Dendritic cell treated with granulocyte-macrophage colony-stimulating factor and Interleukin-4, amounts not matched to agents 40 ng/mL and 50 ng/mL, for 4 days (primary cell): ENCODE measurements at regions of chr11 and their contacts with region 1.

Region 1: GRCh38 chr11:121886005-121886734 is 229.8 kb downstream of the BLID start:
- H3K4me3 Mint-ChIP-seq: no peak overlapping the region
- H3K27ac Mint-ChIP-seq: no peak overlapping the region
- H3K4me1 Mint-ChIP-seq: peaks cover 57% of the 10 kb centered on the region
- H3K27me3 Mint-ChIP-seq: peaks cover 14% of the 10 kb centered on the region

Region 2: GRCh38 chr11:121292495-121293287 is 593.5 kb before region 1 on chr11 and contains the start of gene SC5D:
- intact Hi-C with region 1: no loop called
- H3K4me3 Mint-ChIP-seq: peak within 1 kb of the TSS; percentile 90
- H3K27ac Mint-ChIP-seq: peak within 1 kb of the TSS; percentile 89
- H3K4me1 Mint-ChIP-seq: peaks cover 35% of the 10 kb centered on the region
- H3K27me3 Mint-ChIP-seq: no peaks in the 10 kb centered on the region

Region 3: GRCh38 chr11:121417055-121417551 is 469.1 kb before region 1 on chr11:
- intact Hi-C with region 1: no loop called
- H3K4me3 Mint-ChIP-seq: peak overlapping the region; percentile 2
- H3K27ac Mint-ChIP-seq: peak overlapping the region; percentile 93
- H3K4me1 Mint-ChIP-seq: peaks cover 78% of the 10 kb centered on the region
- H3K27me3 Mint-ChIP-seq: no peaks in the 10 kb centered on the region

Region 4: GRCh38 chr11:122235615-122236014 is 349.4 kb after region 1 on chr11:
- intact Hi-C with region 1: loop called (anchors 10 kb)
- H3K4me3 Mint-ChIP-seq: no peak overlapping the region
- H3K27ac Mint-ChIP-seq: no peak overlapping the region
- H3K4me1 Mint-ChIP-seq: peaks cover 9% of the 10 kb centered on the region
- H3K27me3 Mint-ChIP-seq: no peaks in the 10 kb centered on the region